ENCODE measurements at regions of chr11 and their contacts with region 1.

Region 1: GRCh38 chr11:68206187-68206601 is 6.9 kb downstream of the KMT5B start:
- DNase-seq: peak in 1 of 2 donors; percentile 81
- H3K4me3 ChIP-seq: no peak overlapping the region
- H3K27ac ChIP-seq: peak overlapping the region; percentile 7 to 73 (median 33)
- H3K4me1 ChIP-seq: peaks cover 56 to 97% (median 87%) of the 10 kb centered on the region in 4 donors
- H3K27me3 ChIP-seq: no peaks in the 10 kb centered on the region
- CTCF ChIP-seq: peak in 5 of 7 experiments; percentile 49 to 85 (median 77)
- EP300 ChIP-seq: no peak
- POLR2A ChIP-seq: no peak

Region 2: DNA sequence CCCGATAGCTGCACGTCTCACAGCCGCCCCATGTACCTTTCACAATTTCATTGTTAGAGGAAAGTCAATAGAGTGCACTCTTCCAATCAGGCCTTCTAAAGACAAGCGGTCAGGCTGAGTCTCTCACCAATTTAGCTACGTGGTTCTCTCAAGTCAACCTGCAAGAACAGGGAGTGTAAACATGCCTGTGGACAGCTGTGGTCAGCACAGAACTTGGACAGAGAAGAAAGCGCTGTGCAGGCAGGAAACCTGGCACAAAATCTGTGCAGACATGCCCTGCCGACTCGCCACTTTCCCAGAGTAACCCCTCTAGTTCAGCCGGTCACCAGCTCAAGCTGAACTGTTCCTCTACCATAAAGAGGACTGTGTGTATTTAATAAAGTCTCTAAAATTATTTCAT is 124.5 kb before region 1 on chr11:
- intact Hi-C with region 1: loop called (anchors 5 kb)
- DNase-seq: peak in 1 of 2 donors; percentile 79
- H3K4me3 ChIP-seq: no peak overlapping the region
- H3K27ac ChIP-seq: peak overlapping the region; percentile 40 to 66 (median 42)
- H3K4me1 ChIP-seq: peaks cover 20 to 53% (median 41%) of the 10 kb centered on the region in 4 donors
- H3K27me3 ChIP-seq: no peaks in the 10 kb centered on the region
- CTCF ChIP-seq: no peak
- EP300 ChIP-seq: no peak
- POLR2A ChIP-seq: no peak